CD4-positive, alpha-beta memory T cell (primary cell): ENCODE measurements at regions of chr3 and their contacts with region 1.

Region 1: GRCh38 chr3:28241221-28242160 is at the start of gene CMC1:
- DNase-seq: peak; percentile 81 to 92 (median 83)
- H3K4me3 ChIP-seq: peak within 1 kb of the TSS; percentile 82 to 83
- H3K4me3 Mint-ChIP-seq: peak within 1 kb of the TSS; percentile 93 to 97 (median 96)
- H3K27ac ChIP-seq: peak within 1 kb of the TSS; percentile 73
- H3K27ac Mint-ChIP-seq: peak within 1 kb of the TSS; percentile 47 to 96 (median 93)
- H3K4me1 ChIP-seq: peaks cover 51% of the 10 kb centered on the region
- H3K4me1 Mint-ChIP-seq: peaks cover 36 to 62% (median 43%) of the 10 kb centered on the region in 4 donors
- H3K27me3 ChIP-seq: no peaks in the 10 kb centered on the region
- H3K27me3 Mint-ChIP-seq: no peaks in the 10 kb centered on the region
- total RNA-seq, gene CMC1: 15.9 to 18.4 TPM

Region 2: DNA sequence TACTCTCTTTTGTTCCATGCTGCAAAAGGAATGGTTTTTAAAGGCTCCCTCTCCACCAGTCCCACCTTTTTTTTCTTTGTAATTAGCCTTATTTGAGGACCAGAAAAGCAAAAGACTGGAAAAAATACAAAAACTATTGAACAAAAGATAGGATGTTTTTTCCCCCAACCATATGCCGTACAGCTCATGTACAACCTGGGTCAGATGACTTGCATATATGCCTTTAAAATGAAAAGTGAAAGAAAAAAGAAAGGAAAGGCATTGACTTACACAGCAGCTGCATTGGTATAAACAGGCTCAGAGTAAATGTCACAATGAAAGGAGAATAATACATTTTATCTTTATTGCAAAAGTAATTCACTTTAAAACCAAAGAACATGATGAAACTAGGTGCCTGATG is 69.5 kb before region 1 on chr3:
- CTCF ChIA-PET with region 1: interaction called, 3 read pairs
- POLR2A ChIA-PET with region 1: interaction called, 3 read pairs
- intact Hi-C with region 1: loop called (anchors 5 kb)
- DNase-seq: peak in 4 of 5 donors; percentile 6 to 38 (median 27)
- H3K4me3 ChIP-seq: peak overlapping the region in 1 of 2 donors; percentile 47
- H3K4me3 Mint-ChIP-seq: peak overlapping the region in 7 of 8 donors; percentile 28 to 86 (median 75)
- H3K27ac ChIP-seq: no peak overlapping the region
- H3K27ac Mint-ChIP-seq: peak overlapping the region in 6 of 7 donors; percentile 15 to 75 (median 69)
- H3K4me1 ChIP-seq: peaks cover 18% of the 10 kb centered on the region
- H3K4me1 Mint-ChIP-seq: peaks cover 11 to 16% (median 11%) of the 10 kb centered on the region in 4 donors
- H3K27me3 ChIP-seq: no peaks in the 10 kb centered on the region
- H3K27me3 Mint-ChIP-seq: peaks cover 0 to 2% of the 10 kb centered on the region in 2 donors

Region 3: DNA sequence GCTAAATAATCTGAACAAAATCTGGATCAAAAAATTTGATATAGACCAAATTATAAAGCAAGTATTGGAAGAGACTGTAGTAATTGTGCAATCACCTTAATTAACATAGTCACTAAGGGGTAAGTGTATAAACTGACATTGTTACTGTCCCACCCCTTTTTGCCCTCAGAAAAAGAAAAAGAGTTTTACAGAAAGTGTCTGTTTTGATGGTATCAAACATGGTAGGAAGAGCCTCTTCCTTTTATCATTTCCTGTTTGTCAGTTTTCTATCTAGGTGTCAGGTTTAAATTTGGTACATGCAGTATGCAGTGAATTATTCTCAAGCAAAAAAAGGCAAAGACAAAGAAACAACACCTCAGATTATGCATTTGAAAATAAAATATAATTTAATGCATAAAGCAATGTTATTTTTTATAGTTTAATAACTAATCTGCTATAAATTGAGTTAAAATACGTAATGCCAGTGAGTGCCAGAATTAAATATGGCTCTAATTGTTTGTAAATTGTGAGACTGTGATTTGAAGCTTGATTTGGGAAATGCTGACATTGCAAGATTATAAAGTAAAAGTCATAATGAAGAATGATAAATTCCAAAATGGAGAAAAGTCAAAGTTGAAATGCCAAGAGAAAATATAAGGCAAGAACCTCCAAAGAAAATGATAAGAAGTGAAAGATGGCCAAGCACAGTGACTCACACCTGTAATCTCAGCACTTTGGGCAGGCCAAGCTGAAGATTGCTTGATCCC is 30.4 kb before region 1 on chr3:
- CTCF ChIA-PET with region 1: no interaction called
- POLR2A ChIA-PET with region 1: no interaction called
- intact Hi-C with region 1: loop called (anchors 2 kb)
- DNase-seq: peak in 4 of 5 donors; percentile 23 to 38 (median 34)
- H3K4me3 ChIP-seq: no peak overlapping the region
- H3K4me3 Mint-ChIP-seq: peak overlapping the region in 7 of 8 donors; percentile 26 to 67 (median 59)
- H3K27ac ChIP-seq: no peak overlapping the region
- H3K27ac Mint-ChIP-seq: peak overlapping the region; percentile 33 to 83 (median 74)
- H3K4me1 ChIP-seq: peaks cover 21% of the 10 kb centered on the region
- H3K4me1 Mint-ChIP-seq: peaks cover 18 to 31% (median 26%) of the 10 kb centered on the region in 4 donors
- H3K27me3 ChIP-seq: no peaks in the 10 kb centered on the region
- H3K27me3 Mint-ChIP-seq: no peaks in the 10 kb centered on the region

Region 4: GRCh38 chr3:28252001-28252431 is 10.5 kb after region 1 on chr3:
- CTCF ChIA-PET with region 1: no interaction called
- POLR2A ChIA-PET with region 1: interaction called, 6 read pairs
- intact Hi-C with region 1: loop called (anchors 2 kb)
- DNase-seq: peak in 4 of 5 donors; percentile 26 to 39 (median 32)
- H3K4me3 ChIP-seq: no peak overlapping the region
- H3K4me3 Mint-ChIP-seq: peak overlapping the region in 4 of 8 donors; percentile 17 to 60 (median 42)
- H3K27ac ChIP-seq: no peak overlapping the region
- H3K27ac Mint-ChIP-seq: peak overlapping the region in 1 of 7 donors; percentile 81
- H3K4me1 ChIP-seq: peaks cover 42% of the 10 kb centered on the region
- H3K4me1 Mint-ChIP-seq: peaks cover 39 to 76% (median 54%) of the 10 kb centered on the region in 4 donors
- H3K27me3 ChIP-seq: no peaks in the 10 kb centered on the region
- H3K27me3 Mint-ChIP-seq: no peaks in the 10 kb centered on the region

Region 5: GRCh38 chr3:28575746-28576613 is 334.5 kb after region 1 on chr3:
- CTCF ChIA-PET with region 1: no interaction called
- POLR2A ChIA-PET with region 1: no interaction called
- intact Hi-C with region 1: no loop called
- DNase-seq: no peak
- H3K4me3 ChIP-seq: no peak overlapping the region
- H3K4me3 Mint-ChIP-seq: no peak overlapping the region
- H3K27ac ChIP-seq: no peak overlapping the region
- H3K27ac Mint-ChIP-seq: no peak overlapping the region
- H3K4me1 ChIP-seq: no peaks in the 10 kb centered on the region
- H3K4me1 Mint-ChIP-seq: peaks cover 2 to 7% (median 3%) of the 10 kb centered on the region in 4 donors
- H3K27me3 ChIP-seq: peaks cover 12% of the 10 kb centered on the region
- H3K27me3 Mint-ChIP-seq: peaks cover 33 to 39% of the 10 kb centered on the region in 2 donors

Region 6: GRCh38 chr3:28756056-28756455 is 514.6 kb after region 1 on chr3:
- CTCF ChIA-PET with region 1: no interaction called
- POLR2A ChIA-PET with region 1: no interaction called
- intact Hi-C with region 1: no loop called
- DNase-seq: no peak
- H3K4me3 ChIP-seq: no peak overlapping the region
- H3K4me3 Mint-ChIP-seq: no peak overlapping the region
- H3K27ac ChIP-seq: no peak overlapping the region
- H3K27ac Mint-ChIP-seq: no peak overlapping the region
- H3K4me1 ChIP-seq: no peaks in the 10 kb centered on the region
- H3K4me1 Mint-ChIP-seq: no peaks in the 10 kb centered on the region
- H3K27me3 ChIP-seq: no peaks in the 10 kb centered on the region
- H3K27me3 Mint-ChIP-seq: no peaks in the 10 kb centered on the region